ENCODE measurements at regions of chr4 and their contacts with region 1.

Region 1: DNA sequence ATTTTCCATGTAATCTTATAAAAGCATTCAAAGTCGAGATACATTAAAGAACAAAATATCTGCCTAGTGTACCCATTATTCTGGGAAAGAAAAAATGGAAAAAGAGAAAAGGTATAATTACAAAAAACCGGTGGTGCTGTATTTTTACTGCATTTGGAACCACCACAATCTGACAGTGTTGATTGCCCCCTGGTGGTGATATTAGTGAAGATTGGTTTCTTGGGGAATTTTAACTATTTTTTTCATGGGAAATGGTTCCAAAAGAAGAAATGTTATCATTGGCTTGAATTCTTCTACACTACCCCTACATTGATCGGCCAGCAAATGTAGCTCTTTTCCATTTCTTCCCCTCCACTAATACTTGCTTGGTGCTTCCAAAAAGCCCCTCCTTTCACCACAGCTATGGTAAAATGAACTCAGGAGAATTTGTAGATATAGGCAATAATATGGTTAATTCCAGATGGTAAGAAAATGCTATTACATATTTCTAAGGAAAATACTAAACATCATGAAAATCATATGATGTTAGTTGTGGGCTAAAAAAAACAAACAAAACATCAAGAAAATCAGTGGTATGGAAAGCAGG is 50.0 kb downstream of the COX18 start:
- DNase-seq: peak; percentile 43
- H3K4me3 ChIP-seq: no peak overlapping the region
- H3K27ac ChIP-seq: no peak overlapping the region
- H3K4me1 ChIP-seq: no peaks in the 10 kb centered on the region
- H3K27me3 ChIP-seq: no peaks in the 10 kb centered on the region
- CTCF ChIP-seq: peak; percentile 56

Region 2: GRCh38 chr4:72302981-72303704 is 716.4 kb before region 1 on chr4:
- CTCF ChIA-PET with region 1: no interaction called
- POLR2A ChIA-PET with region 1: no interaction called
- intact Hi-C with region 1: loop called (anchors 2 kb)
- DNase-seq: peak; percentile 54
- H3K4me3 ChIP-seq: no peak overlapping the region
- H3K27ac ChIP-seq: no peak overlapping the region
- H3K4me1 ChIP-seq: no peaks in the 10 kb centered on the region
- H3K27me3 ChIP-seq: no peaks in the 10 kb centered on the region
- CTCF ChIP-seq: peak; percentile 64

Region 3: DNA sequence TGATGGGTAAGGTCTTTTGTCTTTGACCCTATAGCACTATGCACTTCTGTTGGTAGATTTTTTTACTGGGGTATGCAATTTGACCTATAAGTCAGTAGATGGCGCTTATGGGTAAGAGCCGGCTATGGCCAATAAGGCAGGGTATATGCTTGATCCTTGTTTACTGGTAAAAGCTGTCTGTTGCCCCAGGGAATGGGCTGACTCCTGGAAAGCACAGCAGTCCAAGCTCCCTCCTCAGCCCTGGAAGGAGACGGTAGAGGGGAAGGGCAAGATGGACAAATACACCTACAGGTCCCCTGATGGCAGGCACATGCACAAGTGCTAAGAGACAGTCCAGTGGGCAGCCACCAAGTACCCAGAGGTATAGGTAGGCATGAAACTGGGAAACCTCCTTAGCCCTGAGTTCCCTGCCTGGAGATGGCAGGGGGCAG is 514.2 kb before region 1 on chr4:
- CTCF ChIA-PET with region 1: no interaction called
- POLR2A ChIA-PET with region 1: no interaction called
- intact Hi-C with region 1: loop called (anchors 5 kb)
- DNase-seq: peak; percentile 40
- H3K4me3 ChIP-seq: no peak overlapping the region
- H3K27ac ChIP-seq: no peak overlapping the region
- H3K4me1 ChIP-seq: no peaks in the 10 kb centered on the region
- H3K27me3 ChIP-seq: no peaks in the 10 kb centered on the region
- CTCF ChIP-seq: peak; percentile 58

Region 4: DNA sequence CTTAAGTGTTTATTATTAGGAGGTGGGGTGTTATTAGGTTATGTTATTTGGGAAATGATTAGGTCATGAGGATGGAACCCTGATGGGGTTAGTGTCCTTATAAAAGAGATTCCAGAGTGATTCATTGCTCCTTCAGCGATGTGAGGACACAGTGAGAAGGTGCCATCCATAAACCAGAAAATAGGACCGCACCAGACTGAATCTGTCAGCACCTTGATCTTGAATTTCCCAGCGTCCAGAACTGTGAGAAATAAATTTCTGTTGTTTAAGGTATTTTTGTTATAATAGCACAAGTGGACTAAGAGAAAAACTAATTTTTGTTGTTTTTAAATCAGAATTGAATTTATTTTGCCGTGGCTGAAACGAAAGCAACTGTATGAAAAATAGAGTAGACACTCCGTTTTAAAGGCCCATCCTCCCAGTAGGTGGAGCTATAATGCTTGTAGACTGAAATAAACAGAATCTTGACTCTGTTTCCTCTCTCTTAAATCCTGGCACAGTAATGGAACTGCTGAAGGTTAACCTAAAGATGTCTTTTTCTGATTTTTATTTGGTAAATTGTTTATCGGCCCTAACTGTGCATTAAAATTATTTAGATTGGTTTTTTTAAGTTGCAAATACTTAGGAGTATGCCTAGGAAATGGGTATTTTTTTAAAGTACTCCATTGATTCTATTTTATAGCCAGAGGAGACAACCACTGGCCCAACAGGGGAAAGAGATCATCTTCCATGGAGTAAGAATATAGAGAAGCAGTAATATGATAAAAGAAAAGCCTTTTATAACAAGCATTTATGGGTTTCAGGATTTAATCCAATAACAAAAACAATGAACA is 317.4 kb before region 1 on chr4:
- CTCF ChIA-PET with region 1: no interaction called
- POLR2A ChIA-PET with region 1: no interaction called
- intact Hi-C with region 1: loop called (anchors 5 kb)
- DNase-seq: peak; percentile 39
- H3K4me3 ChIP-seq: peak overlapping the region; percentile 28
- H3K27ac ChIP-seq: no peak overlapping the region
- H3K4me1 ChIP-seq: no peaks in the 10 kb centered on the region
- H3K27me3 ChIP-seq: no peaks in the 10 kb centered on the region
- CTCF ChIP-seq: peak; percentile 54

Region 5: DNA sequence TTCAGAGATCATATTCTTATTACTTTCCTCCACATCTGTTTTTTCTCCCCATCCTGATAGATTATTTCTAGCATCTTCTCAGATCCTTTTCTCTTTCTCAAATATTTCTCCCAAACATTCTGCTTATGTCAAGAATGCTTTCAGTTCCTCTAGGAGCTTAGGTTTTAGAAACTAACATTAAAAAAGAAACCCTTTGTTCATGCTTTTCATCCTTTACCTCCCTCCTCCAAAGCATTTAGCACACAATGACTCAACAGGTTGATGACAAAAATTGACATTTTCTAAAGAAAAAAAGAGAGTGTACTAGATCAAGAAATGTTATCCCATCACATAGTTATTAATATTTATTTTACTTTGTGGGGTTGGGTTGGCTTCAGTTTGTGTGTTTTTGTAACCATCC is 368.0 kb after region 1 on chr4:
- CTCF ChIA-PET with region 1: no interaction called
- POLR2A ChIA-PET with region 1: no interaction called
- intact Hi-C with region 1: no loop called
- DNase-seq: no peak
- H3K4me3 ChIP-seq: no peak overlapping the region
- H3K27ac ChIP-seq: no peak overlapping the region
- H3K4me1 ChIP-seq: no peaks in the 10 kb centered on the region
- H3K27me3 ChIP-seq: no peaks in the 10 kb centered on the region
- CTCF ChIP-seq: no peak

Region 6: DNA sequence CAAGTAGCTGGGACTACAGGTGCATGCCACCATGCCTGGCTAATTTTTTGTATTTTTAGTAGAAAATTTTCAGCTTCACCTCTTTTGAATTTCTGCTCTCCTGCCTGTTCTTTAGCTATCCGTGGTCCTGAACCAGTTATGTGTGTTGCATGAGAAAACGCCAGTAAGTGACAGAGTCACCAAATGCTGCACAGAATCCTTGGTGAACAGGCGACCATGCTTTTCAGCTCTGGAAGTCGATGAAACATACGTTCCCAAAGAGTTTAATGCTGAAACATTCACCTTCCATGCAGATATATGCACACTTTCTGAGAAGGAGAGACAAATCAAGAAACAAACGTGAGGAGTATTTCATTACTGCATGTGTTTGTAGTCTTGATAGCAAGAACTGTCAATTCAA is 398.4 kb after region 1 on chr4:
- CTCF ChIA-PET with region 1: no interaction called
- POLR2A ChIA-PET with region 1: no interaction called
- intact Hi-C with region 1: no loop called
- DNase-seq: no peak
- H3K4me3 ChIP-seq: no peak overlapping the region
- H3K27ac ChIP-seq: no peak overlapping the region
- H3K4me1 ChIP-seq: no peaks in the 10 kb centered on the region
- H3K27me3 ChIP-seq: no peaks in the 10 kb centered on the region
- CTCF ChIP-seq: no peak

Measured in A673 (cell line).